ENCODE measurements at regions of chr2 and their contacts with region 1.

Region 1: DNA sequence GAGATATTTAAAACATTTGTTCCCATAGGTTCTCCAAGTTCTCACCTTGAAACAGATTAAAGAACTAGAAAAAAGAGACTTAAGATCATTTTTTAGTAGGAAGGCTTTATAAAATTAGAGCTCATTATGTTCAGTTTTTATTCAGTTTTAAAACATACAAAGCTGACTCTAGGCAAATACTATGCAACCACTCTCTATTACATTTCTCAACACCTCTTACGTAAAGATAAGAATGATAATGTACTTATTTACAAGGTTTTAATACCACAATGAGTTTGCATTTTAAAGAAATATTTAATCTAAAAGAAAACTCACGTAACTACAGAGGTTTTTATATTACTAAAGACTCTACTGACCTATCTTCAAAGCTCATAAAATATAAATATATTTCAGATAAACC is 68.8 kb downstream of the TMEM131 start:
- DNase-seq: no peak
- H3K4me3 ChIP-seq: no peak overlapping the region
- H3K27ac ChIP-seq: no peak overlapping the region
- H3K4me1 ChIP-seq: peaks cover 40% of the 10 kb centered on the region
- CTCF ChIP-seq: no peak

Region 2: GRCh38 chr2:97654791-97655190 is 272.2 kb before region 1 on chr2:
- CTCF ChIA-PET with region 1: no interaction called
- POLR2A ChIA-PET with region 1: no interaction called
- intact Hi-C with region 1: no loop called
- DNase-seq: no peak
- H3K4me3 ChIP-seq: no peak overlapping the region
- H3K27ac ChIP-seq: no peak overlapping the region
- H3K4me1 ChIP-seq: no peaks in the 10 kb centered on the region
- CTCF ChIP-seq: no peak

Region 3: DNA sequence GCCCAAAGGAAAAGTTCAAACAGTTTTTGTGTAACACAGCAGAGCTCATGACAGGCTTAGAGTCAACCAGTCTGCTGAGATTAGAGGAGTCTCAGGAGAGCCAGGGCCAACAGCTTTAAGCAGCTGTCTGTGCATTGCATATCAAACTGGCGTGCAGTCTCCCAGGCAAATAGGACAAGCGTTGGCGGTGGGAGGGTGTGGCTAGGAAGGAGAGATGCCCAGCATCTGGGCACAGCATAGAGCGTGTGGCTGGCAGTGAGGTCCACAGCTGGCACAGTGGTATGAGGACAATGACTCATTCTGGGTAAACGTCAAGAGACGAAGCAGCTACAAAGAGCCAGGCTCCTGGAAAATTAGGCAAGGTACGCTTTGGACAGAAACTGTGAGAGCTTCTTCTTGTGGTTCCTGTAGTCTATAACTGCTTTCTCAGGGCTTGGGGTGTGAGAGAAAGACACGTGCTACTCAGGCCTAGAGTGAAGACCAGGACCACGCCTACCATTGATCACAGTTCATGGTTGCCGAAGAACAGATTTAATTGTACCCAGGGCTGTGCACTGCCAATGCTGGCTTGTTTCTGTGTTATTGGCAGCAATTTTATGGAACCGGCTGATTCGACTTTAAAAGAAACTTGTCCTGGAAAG is 198.7 kb before region 1 on chr2:
- CTCF ChIA-PET with region 1: no interaction called
- POLR2A ChIA-PET with region 1: no interaction called
- intact Hi-C with region 1: no loop called
- DNase-seq: no peak
- H3K4me3 ChIP-seq: no peak overlapping the region
- H3K27ac ChIP-seq: no peak overlapping the region
- H3K4me1 ChIP-seq: no peaks in the 10 kb centered on the region
- CTCF ChIP-seq: no peak

Region 4: GRCh38 chr2:97774425-97774824 is 152.5 kb before region 1 on chr2:
- CTCF ChIA-PET with region 1: no interaction called
- POLR2A ChIA-PET with region 1: no interaction called
- intact Hi-C with region 1: no loop called
- DNase-seq: peak; percentile 39
- H3K4me3 ChIP-seq: no peak overlapping the region
- H3K27ac ChIP-seq: no peak overlapping the region
- H3K4me1 ChIP-seq: no peaks in the 10 kb centered on the region
- CTCF ChIP-seq: peak; percentile 82

Region 5: GRCh38 chr2:97911206-97911921 is 15.6 kb before region 1 on chr2:
- CTCF ChIA-PET with region 1: no interaction called
- POLR2A ChIA-PET with region 1: interaction called, 16 read pairs
- intact Hi-C with region 1: no loop called
- DNase-seq: no peak
- H3K4me3 ChIP-seq: no peak overlapping the region
- H3K27ac ChIP-seq: no peak overlapping the region
- H3K4me1 ChIP-seq: peaks cover 51% of the 10 kb centered on the region
- CTCF ChIP-seq: no peak